Right ventricle myocardium inferior (tissue), 1 donor: ENCODE measurements at regions of chr11 and their contacts with region 1.

Region 1: GRCh38 chr11:63536669-63537292 is at the start of gene PLAAT4:
- DNase-seq: no peak
- ATAC-seq: peak; percentile 65
- total RNA-seq, gene PLAAT4: 36.1 TPM

Region 2: GRCh38 chr11:63553741-63554151 is 17.0 kb after region 1 on chr11:
- intact Hi-C with region 1: no loop called
- DNase-seq: no peak
- ATAC-seq: no peak

Region 3: GRCh38 chr11:63567044-63567840 is 30.5 kb after region 1 on chr11:
- intact Hi-C with region 1: loop called (anchors 2 kb)
- DNase-seq: no peak
- ATAC-seq: peak; percentile 95

Region 4: GRCh38 chr11:63603163-63603518 is 66.4 kb after region 1 on chr11:
- intact Hi-C with region 1: no loop called
- DNase-seq: no peak
- ATAC-seq: peak; percentile 33

Region 5: DNA sequence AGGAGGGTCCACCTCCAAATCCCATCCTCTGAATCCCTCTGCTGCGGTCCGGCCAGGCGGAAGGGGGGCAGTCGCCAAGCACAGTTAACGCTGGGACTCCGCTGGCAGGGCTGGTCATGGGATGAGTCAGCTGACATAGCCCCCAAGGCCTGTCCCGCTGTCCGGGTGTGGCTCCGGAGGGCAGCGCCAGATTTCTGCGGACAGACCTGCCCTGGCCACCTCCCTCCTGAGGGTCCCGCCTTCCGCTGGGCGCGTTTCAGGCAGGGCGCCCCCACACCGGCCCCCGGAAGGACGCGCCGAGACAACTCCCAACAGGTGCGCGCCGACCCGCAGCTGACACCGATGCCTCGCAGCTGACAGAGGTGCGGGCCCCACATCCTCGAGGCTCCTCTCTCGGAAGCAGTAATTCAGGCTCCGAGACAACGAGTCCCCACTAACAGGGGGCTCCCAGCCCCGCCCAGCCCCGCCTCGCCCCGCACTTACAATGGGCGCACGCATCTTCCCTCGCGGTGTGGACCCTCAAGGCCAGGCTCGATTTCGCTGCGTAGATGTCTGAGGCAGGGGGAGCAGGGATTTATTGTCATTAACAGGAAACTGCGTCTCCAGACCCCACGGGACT is 76.8 kb after region 1 on chr11:
- intact Hi-C with region 1: loop called (anchors 1 kb)
- DNase-seq: peak; percentile 77
- ATAC-seq: peak; percentile 57